ENCODE measurements at regions of chr11 and their contacts with region 1.

Region 1: GRCh38 chr11:61639816-61640443 is 40.3 kb upstream of the DAGLA start:
- DNase-seq: no peak
- H3K4me3 ChIP-seq: no peak overlapping the region
- H3K27me3 ChIP-seq: peaks cover 5% of the 10 kb centered on the region; the same call in 1 of the 2 replicates
- CTCF ChIP-seq: no peak

Region 2: GRCh38 chr11:61446211-61446651 is 193.7 kb before region 1 on chr11:
- CTCF ChIA-PET with region 1: interaction called, 84 read pairs
- POLR2A ChIA-PET with region 1: no interaction called
- DNase-seq: peak; percentile 82
- H3K4me3 ChIP-seq: no peak overlapping the region
- H3K27me3 ChIP-seq: no peaks in the 10 kb centered on the region
- CTCF ChIP-seq: peak; percentile 97

Region 3: DNA sequence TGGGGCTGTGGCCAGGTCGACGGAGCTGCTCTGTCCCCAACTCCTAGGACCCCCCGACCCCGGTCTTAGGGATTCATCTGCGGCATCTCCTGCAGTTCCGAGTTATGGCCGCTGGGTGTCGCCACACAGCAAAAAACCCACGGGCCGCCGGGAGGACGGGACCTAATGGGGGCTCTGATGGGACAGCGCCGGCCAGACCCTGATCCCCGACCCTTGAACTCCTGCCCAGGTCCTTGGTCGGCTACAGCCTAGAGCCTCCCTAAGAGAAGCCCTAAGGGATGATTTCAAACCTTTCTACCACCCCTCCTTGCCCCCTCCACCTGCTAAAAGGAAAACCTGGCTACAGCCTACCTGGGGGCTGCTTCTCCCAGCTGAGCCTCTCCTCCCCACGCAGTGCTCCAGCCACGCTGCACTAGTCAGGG is 162.2 kb before region 1 on chr11:
- CTCF ChIA-PET with region 1: interaction called, 93 read pairs
- POLR2A ChIA-PET with region 1: no interaction called
- DNase-seq: no peak
- H3K4me3 ChIP-seq: no peak overlapping the region
- H3K27me3 ChIP-seq: peaks cover 1% of the 10 kb centered on the region
- CTCF ChIP-seq: peak; percentile 90

Region 4: GRCh38 chr11:61581030-61581928 is 58.7 kb before region 1 on chr11 and contains the start of gene SYT7:
- CTCF ChIA-PET with region 1: interaction called, 11 read pairs
- POLR2A ChIA-PET with region 1: no interaction called
- DNase-seq: peak; percentile 47
- H3K4me3 ChIP-seq: peak within 1 kb of the TSS; percentile 41
- H3K27me3 ChIP-seq: peaks cover 39% of the 10 kb centered on the region
- CTCF ChIP-seq: no peak; the same call in 1 of the 2 replicates
- polyA plus RNA-seq, gene SYT7: 0.01 and 0.04 TPM in 2 replicates

Region 5: GRCh38 chr11:61650781-61651571 is 11.0 kb after region 1 on chr11:
- CTCF ChIA-PET with region 1: interaction called, 15 read pairs
- POLR2A ChIA-PET with region 1: no interaction called
- DNase-seq: no peak
- H3K4me3 ChIP-seq: no peak overlapping the region
- H3K27me3 ChIP-seq: peaks cover 4% of the 10 kb centered on the region; the same call in 1 of the 2 replicates
- CTCF ChIP-seq: no peak